A549 (cell line): ENCODE measurements at regions of chr6 and their contacts with region 1.

Region 1: GRCh38 chr6:134529921-134530320 is 212.0 kb upstream of the SGK1 start:
- DNase-seq: peak; percentile 28 to 89
- ATAC-seq: peak; percentile 88 to 96
- H3K4me3 ChIP-seq: no peak overlapping the region
- H3K27ac ChIP-seq: peak overlapping the region; percentile 85 to 92
- H3K4me1 ChIP-seq: peaks cover 54% of the 10 kb centered on the region
- CTCF ChIP-seq: no peak
- EP300 ChIP-seq: peak; percentile 96 to 97
- POLR2A ChIP-seq: no peak
- RAD21 ChIP-seq: peak in 1 of 2 experiments; percentile 64; a peak in 4 of 5 replicates

Region 2: GRCh38 chr6:134464690-134465411 is 65.1 kb before region 1 on chr6:
- CTCF ChIA-PET with region 1: no interaction called
- POLR2A ChIA-PET with region 1: interaction called, 11 read pairs
- DNase-seq: peak; percentile 15 to 76
- ATAC-seq: peak; percentile 43 to 70; a peak in 3 of 6 replicates
- H3K4me3 ChIP-seq: no peak overlapping the region
- H3K27ac ChIP-seq: peak overlapping the region; percentile 69 to 83
- H3K4me1 ChIP-seq: peaks cover 59% of the 10 kb centered on the region
- CTCF ChIP-seq: no peak
- EP300 ChIP-seq: no peak
- POLR2A ChIP-seq: no peak
- RAD21 ChIP-seq: no peak